GM13977 (cell line): ENCODE measurements at regions of chr9 and their contacts with region 1.

Region 1: GRCh38 chr9:127955294-127956035 is 17.8 kb upstream of the DPM2 start:
- DNase-seq: peak; percentile 83
- CTCF ChIP-seq: peak; percentile 58

Region 2: GRCh38 chr9:128034821-128035764 is 79.6 kb after region 1 on chr9:
- in situ Hi-C with region 1: loop called (anchors 5 kb)
- DNase-seq: peak; percentile 76
- CTCF ChIP-seq: peak; percentile 71